Panc1 (cell line): ENCODE measurements at regions of chr1 and their contacts with region 1.

Region 1: GRCh38 chr1:35603468-35603867 is 30.4 kb downstream of the TFAP2E start:
- DNase-seq: no peak
- ATAC-seq: no peak
- H3K4me3 ChIP-seq: no peak overlapping the region
- H3K27ac ChIP-seq: no peak overlapping the region
- H3K4me1 ChIP-seq: no peaks in the 10 kb centered on the region
- H3K27me3 ChIP-seq: no peaks in the 10 kb centered on the region
- CTCF ChIP-seq: no peak

Region 2: GRCh38 chr1:35475856-35476674 is 127.4 kb before region 1 on chr1:
- CTCF ChIA-PET with region 1: no interaction called
- POLR2A ChIA-PET with region 1: no interaction called
- in situ Hi-C with region 1: no loop called
- intact Hi-C with region 1: no loop called
- DNase-seq: no peak
- ATAC-seq: no peak
- H3K4me3 ChIP-seq: no peak overlapping the region
- H3K27ac ChIP-seq: no peak overlapping the region
- H3K4me1 ChIP-seq: no peaks in the 10 kb centered on the region
- H3K27me3 ChIP-seq: no peaks in the 10 kb centered on the region
- CTCF ChIP-seq: no peak

Region 3: DNA sequence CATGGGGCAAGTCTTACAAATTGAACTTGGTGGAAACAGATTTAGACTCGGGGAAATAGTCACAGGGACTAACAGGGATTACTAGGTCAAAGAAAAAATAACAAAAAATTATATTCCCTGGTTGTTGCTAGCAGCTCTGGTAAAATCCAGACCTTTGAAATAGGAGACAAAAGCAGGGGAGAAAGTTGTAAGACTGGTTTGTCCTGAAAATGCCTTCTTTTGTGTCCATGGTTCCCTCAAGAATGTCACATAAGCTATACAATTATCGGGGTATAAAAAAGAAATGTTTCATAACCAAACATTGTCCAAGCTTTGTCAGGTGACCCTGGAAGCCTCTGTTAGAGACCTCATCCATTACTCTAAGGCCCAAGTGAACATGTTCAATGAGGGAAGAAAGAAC is 79.4 kb before region 1 on chr1:
- CTCF ChIA-PET with region 1: no interaction called
- POLR2A ChIA-PET with region 1: no interaction called
- in situ Hi-C with region 1: no loop called
- intact Hi-C with region 1: no loop called
- DNase-seq: no peak
- ATAC-seq: no peak
- H3K4me3 ChIP-seq: no peak overlapping the region
- H3K27ac ChIP-seq: no peak overlapping the region
- H3K4me1 ChIP-seq: no peaks in the 10 kb centered on the region
- H3K27me3 ChIP-seq: no peaks in the 10 kb centered on the region
- CTCF ChIP-seq: no peak

Region 4: GRCh38 chr1:35691080-35691479 is 87.6 kb after region 1 on chr1:
- CTCF ChIA-PET with region 1: no interaction called
- POLR2A ChIA-PET with region 1: interaction called, 10 read pairs
- in situ Hi-C with region 1: no loop called
- intact Hi-C with region 1: no loop called
- DNase-seq: no peak
- ATAC-seq: peak; percentile 38; the same call in 1 of the 2 replicates
- H3K4me3 ChIP-seq: no peak overlapping the region
- H3K27ac ChIP-seq: no peak overlapping the region
- H3K4me1 ChIP-seq: no peaks in the 10 kb centered on the region
- H3K27me3 ChIP-seq: peaks cover 4% of the 10 kb centered on the region; the same call in 1 of the 2 replicates
- CTCF ChIP-seq: no peak